Naive thymus-derived CD4-positive, alpha-beta T cell (primary cell): ENCODE measurements at regions of chr13 and their contacts with region 1.

Region 1: DNA sequence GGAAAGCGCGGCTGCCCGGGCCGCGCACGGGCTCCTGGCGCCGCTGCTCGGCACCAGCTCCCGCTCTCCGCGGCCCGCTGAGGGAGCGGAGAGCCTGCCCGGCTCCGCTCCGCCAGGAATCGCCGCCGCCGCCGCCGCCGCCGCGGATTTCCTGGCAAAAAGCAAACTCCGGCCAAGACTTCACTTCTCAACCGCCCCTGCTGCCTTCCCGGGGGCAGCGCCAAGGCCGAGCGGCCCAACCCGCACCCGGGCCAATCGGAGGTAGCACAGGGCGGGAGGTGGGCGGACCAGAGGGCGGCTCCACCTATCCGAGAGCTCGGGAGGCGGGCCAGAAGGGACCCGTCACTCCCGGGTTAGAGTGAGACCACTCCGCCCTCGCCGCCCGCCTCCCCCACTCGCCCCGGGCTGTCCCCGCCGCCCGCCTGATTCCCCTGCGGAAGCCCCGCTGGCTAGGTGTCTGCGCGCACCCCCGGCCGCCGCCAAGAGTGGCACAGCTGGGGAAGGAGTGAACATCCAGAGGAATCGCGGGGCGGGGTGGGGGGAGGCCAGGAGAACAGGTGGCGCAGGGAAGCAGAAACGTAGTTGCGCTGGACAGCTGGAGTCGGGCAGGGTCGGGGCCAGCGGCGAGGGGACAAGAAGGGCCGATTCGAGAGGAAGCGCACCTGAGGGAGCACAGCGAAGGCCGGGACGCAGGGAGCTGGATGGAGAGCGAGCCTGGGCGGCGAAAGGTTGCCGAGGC is at the start of gene LNX2:
- DNase-seq: peak; percentile 94 to 98 (median 95)
- ATAC-seq: peak; percentile 92
- H3K4me3 ChIP-seq: peak within 1 kb of the TSS; percentile 95
- H3K4me3 Mint-ChIP-seq: peak within 1 kb of the TSS; percentile 90 to 96 (median 95)
- H3K27ac ChIP-seq: peak within 1 kb of the TSS; percentile 97
- H3K27ac Mint-ChIP-seq: peak within 1 kb of the TSS; percentile 87 to 98 (median 97)
- H3K4me1 ChIP-seq: peaks cover 32 to 33% of the 10 kb centered on the region in 2 donors
- H3K4me1 Mint-ChIP-seq: peaks cover 40 to 69% (median 63%) of the 10 kb centered on the region in 7 donors
- H3K27me3 ChIP-seq: no peaks in the 10 kb centered on the region
- H3K27me3 Mint-ChIP-seq: no peaks in the 10 kb centered on the region
- total RNA-seq, gene LNX2: 3.2 to 10.7 (median 7.1) TPM

Region 2: DNA sequence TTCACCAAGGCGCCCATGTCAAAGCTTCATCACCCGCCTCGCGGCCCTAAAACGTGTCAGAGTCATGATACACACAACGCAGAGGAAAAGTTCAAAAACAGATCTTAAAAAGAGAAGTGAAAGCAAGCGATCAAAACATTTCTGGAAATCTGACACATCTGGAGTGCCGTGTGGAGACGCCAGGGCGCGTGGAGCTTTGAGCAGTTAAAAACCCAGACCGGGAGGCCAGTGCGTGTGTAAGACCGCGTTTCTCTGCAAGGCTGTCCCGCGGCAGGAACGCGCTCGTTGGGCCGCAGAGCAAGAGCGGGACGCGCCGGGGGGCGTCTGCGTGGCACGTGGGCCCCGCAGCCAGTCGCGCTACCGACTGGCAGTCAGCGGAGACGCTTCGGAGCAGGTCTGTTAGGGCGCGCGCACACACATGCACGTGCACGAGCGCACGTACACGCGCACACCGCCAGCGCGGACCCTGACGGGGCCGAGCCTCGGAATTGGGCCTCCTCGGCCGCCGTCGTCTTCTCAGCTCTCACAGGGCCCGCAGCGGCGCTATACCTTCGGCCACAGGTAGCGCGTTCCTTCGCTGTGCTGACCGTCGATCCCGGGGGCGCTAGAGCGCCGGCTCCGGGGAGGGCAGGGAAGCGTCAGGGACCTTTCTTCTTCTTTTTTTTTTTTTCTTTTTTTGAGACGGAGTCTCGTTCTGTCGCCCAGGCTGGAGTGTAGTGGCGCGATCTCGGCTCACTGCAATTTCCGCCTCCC is 1434.3 kb before region 1 on chr13:
- CTCF ChIA-PET with region 1: no interaction called
- POLR2A ChIA-PET with region 1: no interaction called
- intact Hi-C with region 1: loop called in 1 of 2 experiments (anchors 10 kb)
- DNase-seq: peak; percentile 86 to 93 (median 92)
- ATAC-seq: peak; percentile 96
- H3K4me3 ChIP-seq: peak overlapping the region; percentile 86
- H3K4me3 Mint-ChIP-seq: peak overlapping the region; percentile 87 to 99 (median 92)
- H3K27ac ChIP-seq: peak overlapping the region; percentile 80
- H3K27ac Mint-ChIP-seq: peak overlapping the region; percentile 92 to 99 (median 95)
- H3K4me1 ChIP-seq: peaks cover 10 to 13% of the 10 kb centered on the region in 2 donors
- H3K4me1 Mint-ChIP-seq: peaks cover 0 to 36% (median 27%) of the 10 kb centered on the region in 7 donors
- H3K27me3 ChIP-seq: no peaks in the 10 kb centered on the region
- H3K27me3 Mint-ChIP-seq: no peaks in the 10 kb centered on the region

Region 3: GRCh38 chr13:27171827-27172494 is 448.6 kb before region 1 on chr13:
- CTCF ChIA-PET with region 1: no interaction called
- POLR2A ChIA-PET with region 1: no interaction called
- intact Hi-C with region 1: loop called (anchors 1 kb)
- DNase-seq: peak; percentile 82 to 91 (median 88)
- ATAC-seq: peak; percentile 94
- H3K4me3 ChIP-seq: peak overlapping the region; percentile 58
- H3K4me3 Mint-ChIP-seq: peak overlapping the region; percentile 78 to 96 (median 88)
- H3K27ac ChIP-seq: peak overlapping the region; percentile 85
- H3K27ac Mint-ChIP-seq: peak overlapping the region; percentile 76 to 95 (median 88)
- H3K4me1 ChIP-seq: peaks cover 24 to 34% of the 10 kb centered on the region in 2 donors
- H3K4me1 Mint-ChIP-seq: peaks cover 23 to 49% (median 44%) of the 10 kb centered on the region in 7 donors
- H3K27me3 ChIP-seq: no peaks in the 10 kb centered on the region
- H3K27me3 Mint-ChIP-seq: no peaks in the 10 kb centered on the region

Region 4: DNA sequence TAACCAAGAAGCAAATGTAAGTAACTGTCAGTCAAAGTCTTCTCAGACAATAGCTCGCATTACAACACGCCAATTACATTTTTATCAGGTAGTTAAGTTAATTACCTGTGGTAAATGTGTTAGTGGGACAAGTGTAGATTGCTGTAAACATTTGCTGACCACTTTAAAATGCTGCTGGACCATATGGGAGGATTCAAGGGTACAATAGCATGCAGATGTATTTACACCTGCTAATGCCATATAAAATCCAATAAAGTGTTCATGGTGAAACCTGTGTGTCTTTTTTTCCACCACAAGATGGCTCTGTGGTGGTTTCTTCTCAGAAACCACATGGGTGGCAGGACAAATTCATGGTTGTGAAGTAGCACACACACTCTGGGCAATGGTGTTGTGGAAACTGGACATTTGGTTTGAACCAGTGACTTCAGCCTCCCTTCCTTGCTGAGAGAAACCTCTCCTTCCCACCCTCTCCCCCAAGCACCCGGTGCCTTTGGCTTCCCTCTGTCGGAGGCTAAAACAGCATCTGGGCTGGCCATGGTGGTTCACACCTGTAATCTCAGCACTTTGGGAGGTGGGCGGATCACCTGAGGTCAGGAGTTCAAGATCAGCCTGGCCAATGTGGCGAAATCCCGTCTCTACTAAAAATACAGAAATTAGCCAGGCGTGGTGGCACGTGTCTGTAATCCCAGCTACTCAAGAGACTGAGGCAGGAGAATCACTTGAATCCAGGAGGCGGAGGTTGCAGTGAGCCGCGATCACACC is 214.2 kb before region 1 on chr13:
- CTCF ChIA-PET with region 1: no interaction called
- POLR2A ChIA-PET with region 1: interaction called, 3 read pairs
- intact Hi-C with region 1: loop called in 1 of 2 experiments (anchors 1 kb)
- DNase-seq: peak in 7 of 9 donors; percentile 25 to 57 (median 48)
- ATAC-seq: peak; percentile 71
- H3K4me3 ChIP-seq: no peak overlapping the region
- H3K4me3 Mint-ChIP-seq: no peak overlapping the region
- H3K27ac ChIP-seq: no peak overlapping the region
- H3K27ac Mint-ChIP-seq: no peak overlapping the region
- H3K4me1 ChIP-seq: no peaks in the 10 kb centered on the region
- H3K4me1 Mint-ChIP-seq: peaks cover 0 to 6% (median 0%) of the 10 kb centered on the region in 7 donors
- H3K27me3 ChIP-seq: no peaks in the 10 kb centered on the region
- H3K27me3 Mint-ChIP-seq: peaks cover 0 to 37% (median 9%) of the 10 kb centered on the region in 5 donors

Region 5: GRCh38 chr13:27455331-27455855 is 165.2 kb before region 1 on chr13:
- CTCF ChIA-PET with region 1: interaction called, 5 read pairs
- POLR2A ChIA-PET with region 1: interaction called, 54 read pairs
- intact Hi-C with region 1: loop called (anchors 1 kb)
- DNase-seq: peak in 5 of 9 donors; percentile 29 to 41 (median 37)
- ATAC-seq: no peak
- H3K4me3 ChIP-seq: peak overlapping the region; percentile 53
- H3K4me3 Mint-ChIP-seq: peak overlapping the region; percentile 83 to 98 (median 94)
- H3K27ac ChIP-seq: peak overlapping the region; percentile 72
- H3K27ac Mint-ChIP-seq: peak overlapping the region; percentile 92 to 99 (median 98)
- H3K4me1 ChIP-seq: peaks cover 11 to 15% of the 10 kb centered on the region in 2 donors
- H3K4me1 Mint-ChIP-seq: peaks cover 15 to 47% (median 31%) of the 10 kb centered on the region in 7 donors
- H3K27me3 ChIP-seq: no peaks in the 10 kb centered on the region
- H3K27me3 Mint-ChIP-seq: no peaks in the 10 kb centered on the region

Region 6: GRCh38 chr13:27516103-27516502 is 104.4 kb before region 1 on chr13:
- CTCF ChIA-PET with region 1: no interaction called
- POLR2A ChIA-PET with region 1: no interaction called
- intact Hi-C with region 1: no loop called
- DNase-seq: no peak
- ATAC-seq: no peak
- H3K4me3 ChIP-seq: no peak overlapping the region
- H3K4me3 Mint-ChIP-seq: no peak overlapping the region
- H3K27ac ChIP-seq: no peak overlapping the region
- H3K27ac Mint-ChIP-seq: no peak overlapping the region
- H3K4me1 ChIP-seq: no peaks in the 10 kb centered on the region
- H3K4me1 Mint-ChIP-seq: no peaks in the 10 kb centered on the region
- H3K27me3 ChIP-seq: no peaks in the 10 kb centered on the region
- H3K27me3 Mint-ChIP-seq: peaks cover 17 to 39% (median 23%) of the 10 kb centered on the region in 5 donors

Region 7: GRCh38 chr13:27658546-27658945 is 38.0 kb after region 1 on chr13:
- CTCF ChIA-PET with region 1: no interaction called
- POLR2A ChIA-PET with region 1: interaction called, 3 read pairs
- intact Hi-C with region 1: loop called in 1 of 2 experiments (anchors 5 kb)
- DNase-seq: no peak
- ATAC-seq: no peak
- H3K4me3 ChIP-seq: no peak overlapping the region
- H3K4me3 Mint-ChIP-seq: no peak overlapping the region
- H3K27ac ChIP-seq: no peak overlapping the region
- H3K27ac Mint-ChIP-seq: no peak overlapping the region
- H3K4me1 ChIP-seq: no peaks in the 10 kb centered on the region
- H3K4me1 Mint-ChIP-seq: peaks cover 4 to 21% (median 12%) of the 10 kb centered on the region in 7 donors
- H3K27me3 ChIP-seq: no peaks in the 10 kb centered on the region
- H3K27me3 Mint-ChIP-seq: no peaks in the 10 kb centered on the region

Region 8: DNA sequence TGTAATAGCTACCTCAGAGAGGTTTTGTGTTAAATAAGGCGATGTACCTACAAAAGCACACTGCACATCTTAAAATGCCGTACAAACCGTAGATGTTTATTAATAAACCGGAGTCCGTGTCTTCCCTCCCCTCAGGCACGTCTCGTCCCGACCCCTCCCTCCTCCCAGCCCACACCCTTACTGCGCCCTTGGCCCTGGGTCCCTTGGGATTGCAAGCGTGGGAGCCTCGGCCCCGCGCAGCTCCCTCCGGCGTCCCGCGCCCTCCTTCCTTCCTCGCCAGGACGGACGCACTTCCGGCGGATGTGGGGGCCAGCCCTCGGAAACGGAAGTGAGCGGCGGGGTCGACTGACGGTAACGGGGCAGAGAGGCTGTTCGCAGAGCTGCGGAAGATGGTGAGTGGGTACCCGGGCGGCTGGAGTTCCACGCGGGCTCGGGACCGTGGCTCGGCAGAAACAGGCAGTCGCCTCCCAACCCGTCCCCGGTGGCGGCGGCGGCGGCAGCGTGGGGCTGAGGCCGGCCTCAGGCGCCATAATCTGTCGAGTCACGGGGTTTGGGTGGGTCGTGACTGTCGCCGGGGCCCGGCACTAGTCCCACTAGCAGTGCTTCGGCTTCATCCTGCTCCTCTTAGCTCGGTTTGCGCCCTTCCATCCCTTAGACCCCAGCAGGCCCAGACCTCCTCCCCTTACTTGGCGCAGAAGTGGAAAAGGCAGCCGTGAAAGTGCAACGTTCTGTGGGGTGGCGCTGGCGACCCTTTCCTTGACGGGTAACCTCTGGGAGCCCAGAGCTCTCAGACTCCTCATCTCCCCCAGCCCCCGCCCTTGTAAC is 1038.5 kb after region 1 on chr13 and contains the start of gene POMP:
- CTCF ChIA-PET with region 1: no interaction called
- POLR2A ChIA-PET with region 1: no interaction called
- intact Hi-C with region 1: loop called (anchors 1 kb)
- DNase-seq: peak; percentile 83 to 96 (median 93)
- ATAC-seq: peak; percentile 95
- H3K4me3 ChIP-seq: peak within 1 kb of the TSS; percentile 86
- H3K4me3 Mint-ChIP-seq: peak within 1 kb of the TSS; percentile 88 to 100 (median 98)
- H3K27ac ChIP-seq: peak within 1 kb of the TSS; percentile 96
- H3K27ac Mint-ChIP-seq: peak within 1 kb of the TSS; percentile 94 to 99 (median 99)
- H3K4me1 ChIP-seq: peaks cover 25 to 29% of the 10 kb centered on the region in 2 donors
- H3K4me1 Mint-ChIP-seq: peaks cover 38 to 84% (median 69%) of the 10 kb centered on the region in 7 donors
- H3K27me3 ChIP-seq: no peaks in the 10 kb centered on the region
- H3K27me3 Mint-ChIP-seq: no peaks in the 10 kb centered on the region
- total RNA-seq, gene POMP: 18.8 to 97.0 (median 21.2) TPM